Activated CD4-positive, alpha-beta T cell treated with anti-CD3 and anti-CD28 coated beads for 36 hours (primary cell): ENCODE measurements at regions of chr12 and their contacts with region 1.

Region 1: DNA sequence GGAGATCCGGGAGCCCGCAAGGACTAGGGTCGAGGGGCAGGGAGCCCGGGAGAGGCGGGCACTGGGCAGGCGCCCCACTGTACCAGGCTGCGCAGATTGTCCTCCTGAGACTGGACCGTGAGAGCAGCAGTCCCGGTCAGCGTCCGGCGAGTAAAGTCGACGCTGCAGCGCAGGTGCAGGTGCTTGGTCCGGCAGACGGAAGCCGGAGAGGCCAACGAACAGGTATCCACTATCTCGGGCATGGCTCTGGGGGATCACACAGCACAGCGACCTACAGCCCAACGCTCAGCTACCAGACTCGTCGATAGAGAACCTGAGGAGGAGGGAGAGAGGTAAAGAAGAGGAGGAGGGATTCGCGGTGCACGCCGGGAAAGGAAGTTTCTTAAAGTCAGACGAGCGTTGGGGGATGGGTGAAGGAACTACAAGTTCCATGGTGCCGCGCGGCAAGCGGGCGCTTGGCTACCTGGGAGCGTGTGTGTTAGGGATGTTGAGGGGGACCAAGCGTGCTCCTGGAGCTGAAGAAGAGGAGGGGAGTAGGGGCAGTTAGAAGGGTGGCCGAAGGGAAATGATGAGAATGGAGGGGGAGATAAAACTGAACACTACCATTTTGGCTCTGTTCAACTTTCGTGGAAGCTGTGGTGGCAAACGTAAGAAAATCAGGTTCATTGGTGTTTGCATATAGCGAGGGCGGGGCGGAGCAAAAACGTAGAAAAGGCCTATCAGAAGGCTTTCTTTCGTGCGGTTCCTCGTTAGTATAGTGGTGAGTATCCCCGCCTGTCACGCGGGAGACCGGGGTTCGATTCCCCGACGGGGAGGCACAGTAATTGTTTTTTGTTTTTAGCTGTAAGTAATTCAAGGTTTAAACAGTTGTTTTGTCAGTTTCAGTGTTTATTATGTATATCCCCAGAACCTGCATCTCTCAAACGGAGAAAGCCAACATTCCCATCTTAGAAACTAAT is at the start of gene LTA4H:
- DNase-seq: peak; percentile 98
- ATAC-seq: peak; percentile 95
- H3K4me3 Mint-ChIP-seq: no peak within 1 kb of the TSS
- H3K27ac Mint-ChIP-seq: no peak within 1 kb of the TSS
- H3K4me1 Mint-ChIP-seq: peaks cover 13% of the 10 kb centered on the region
- H3K27me3 Mint-ChIP-seq: no peaks in the 10 kb centered on the region
- total RNA-seq, gene LTA4H: 138 to 147 TPM

Region 2: GRCh38 chr12:95473884-95474659 is 561.5 kb before region 1 on chr12 and contains the start of gene METAP2:
- CTCF ChIA-PET with region 1: no interaction called
- POLR2A ChIA-PET with region 1: no interaction called
- intact Hi-C with region 1: loop called in 1 of 2 experiments (anchors 10 kb)
- DNase-seq: peak; percentile 97
- ATAC-seq: peak; percentile 98
- H3K4me3 Mint-ChIP-seq: peak within 1 kb of the TSS; percentile 96
- H3K27ac Mint-ChIP-seq: peak within 1 kb of the TSS; percentile 100
- H3K4me1 Mint-ChIP-seq: peaks cover 50% of the 10 kb centered on the region
- H3K27me3 Mint-ChIP-seq: no peaks in the 10 kb centered on the region
- total RNA-seq, gene METAP2: 136 to 152 TPM

Region 3: GRCh38 chr12:95942524-95943329 is 92.8 kb before region 1 on chr12 and contains the start of gene CCDC38:
- CTCF ChIA-PET with region 1: no interaction called
- POLR2A ChIA-PET with region 1: interaction called, 3 read pairs
- intact Hi-C with region 1: loop called (anchors 2 kb)
- DNase-seq: peak; percentile 91
- ATAC-seq: peak; percentile 98
- H3K4me3 Mint-ChIP-seq: peak within 1 kb of the TSS; percentile 84
- H3K27ac Mint-ChIP-seq: peak within 1 kb of the TSS; percentile 91
- H3K4me1 Mint-ChIP-seq: peaks cover 4% of the 10 kb centered on the region
- H3K27me3 Mint-ChIP-seq: no peaks in the 10 kb centered on the region
- total RNA-seq, gene CCDC38: 0.21 TPM in 1 of 2 experiments, not detected in the other

Region 4: DNA sequence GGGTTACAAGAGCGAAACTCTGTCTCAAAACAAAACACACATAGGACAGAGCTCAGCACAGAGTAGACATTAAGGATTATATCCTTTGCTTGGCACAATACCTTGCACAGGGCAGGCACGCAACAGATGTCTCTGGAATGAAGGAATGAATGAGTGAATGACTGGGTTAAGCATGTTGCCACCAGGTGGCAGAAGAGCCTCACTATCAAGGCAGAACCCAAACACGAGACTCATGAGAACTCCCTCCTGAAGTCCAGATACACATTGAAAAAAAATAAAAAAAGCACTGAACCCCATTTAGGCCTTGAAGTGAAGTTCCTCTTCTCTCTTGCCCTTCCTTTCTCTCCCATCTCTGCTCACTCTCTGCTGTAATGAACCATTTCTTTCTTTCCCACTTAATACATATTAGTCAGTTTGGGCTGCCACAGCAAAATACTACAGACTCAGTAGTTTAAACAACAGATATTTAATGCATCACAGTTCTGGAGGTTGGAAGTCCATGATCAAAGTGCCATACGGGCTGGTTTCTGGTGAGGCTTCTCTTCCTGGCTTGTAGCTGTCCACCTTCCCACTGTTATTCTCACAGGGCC is 26.4 kb after region 1 on chr12:
- CTCF ChIA-PET with region 1: interaction called, 5 read pairs
- POLR2A ChIA-PET with region 1: interaction called, 9 read pairs
- intact Hi-C with region 1: loop called in 1 of 2 experiments (anchors 1 kb)
- DNase-seq: peak; percentile 87
- ATAC-seq: peak; percentile 91
- H3K4me3 Mint-ChIP-seq: no peak overlapping the region
- H3K27ac Mint-ChIP-seq: peak overlapping the region; percentile 47
- H3K4me1 Mint-ChIP-seq: peaks cover 23% of the 10 kb centered on the region
- H3K27me3 Mint-ChIP-seq: no peaks in the 10 kb centered on the region

Region 5: GRCh38 chr12:96516472-96517430 is 481.2 kb after region 1 on chr12:
- CTCF ChIA-PET with region 1: interaction called, 11 read pairs
- POLR2A ChIA-PET with region 1: no interaction called
- intact Hi-C with region 1: no loop called
- DNase-seq: peak; percentile 94
- ATAC-seq: peak; percentile 83
- H3K4me3 Mint-ChIP-seq: peak overlapping the region; percentile 21
- H3K27ac Mint-ChIP-seq: peak overlapping the region; percentile 64
- H3K4me1 Mint-ChIP-seq: peaks cover 17% of the 10 kb centered on the region
- H3K27me3 Mint-ChIP-seq: no peaks in the 10 kb centered on the region